Posterior vena cava (tissue), 2 donors: ENCODE measurements at regions of chr12 and their contacts with region 1.

Region 1: DNA sequence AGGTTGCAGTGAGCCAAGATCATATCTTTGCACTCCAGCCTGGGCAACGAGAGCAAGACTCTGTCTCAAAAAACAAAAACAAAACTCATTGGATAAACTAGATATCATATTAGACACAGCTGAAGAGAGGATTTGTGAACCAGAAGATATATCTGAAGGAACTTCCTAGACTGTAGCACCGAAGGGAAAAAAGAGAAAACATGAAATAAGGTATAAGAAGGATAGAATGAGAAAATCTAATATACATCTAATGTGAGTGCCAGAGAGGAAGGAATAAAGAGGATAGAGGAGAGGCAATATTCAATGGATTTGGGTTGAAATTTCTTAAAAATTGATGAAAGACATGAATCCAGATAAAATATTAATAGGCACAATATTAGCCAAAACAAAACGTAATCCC is 22.5 kb downstream of the TMPRSS12 start:
- DNase-seq: no peak

Region 2: DNA sequence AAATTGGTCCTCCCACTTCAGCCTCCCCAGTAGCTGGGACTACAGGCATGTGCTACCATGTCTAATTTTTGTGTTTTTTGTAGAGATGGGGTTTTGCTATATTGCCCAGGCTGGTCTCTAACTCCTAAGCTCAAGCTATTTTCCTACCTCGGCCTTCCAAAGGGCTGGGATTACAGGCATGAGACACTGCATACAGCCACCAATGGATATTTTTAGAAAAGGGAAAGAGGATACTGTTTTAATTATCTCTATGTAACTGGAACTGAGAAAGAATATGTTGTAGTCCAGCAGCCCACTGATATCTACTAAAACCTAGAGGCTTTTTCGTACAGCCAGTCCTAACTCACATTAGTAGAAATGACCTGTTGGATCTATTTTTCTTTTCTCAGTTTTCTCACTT is 16.3 kb before region 1 on chr12:
- intact Hi-C with region 1: loop called in 1 of 2 experiments (anchors 2 kb)
- DNase-seq: no peak

Region 3: GRCh38 chr12:50918584-50919316 is 53.5 kb after region 1 on chr12:
- intact Hi-C with region 1: no loop called
- DNase-seq: no peak